GM12878 (cell line): ENCODE measurements at regions of chr7 and their contacts with region 1.

Region 1: DNA sequence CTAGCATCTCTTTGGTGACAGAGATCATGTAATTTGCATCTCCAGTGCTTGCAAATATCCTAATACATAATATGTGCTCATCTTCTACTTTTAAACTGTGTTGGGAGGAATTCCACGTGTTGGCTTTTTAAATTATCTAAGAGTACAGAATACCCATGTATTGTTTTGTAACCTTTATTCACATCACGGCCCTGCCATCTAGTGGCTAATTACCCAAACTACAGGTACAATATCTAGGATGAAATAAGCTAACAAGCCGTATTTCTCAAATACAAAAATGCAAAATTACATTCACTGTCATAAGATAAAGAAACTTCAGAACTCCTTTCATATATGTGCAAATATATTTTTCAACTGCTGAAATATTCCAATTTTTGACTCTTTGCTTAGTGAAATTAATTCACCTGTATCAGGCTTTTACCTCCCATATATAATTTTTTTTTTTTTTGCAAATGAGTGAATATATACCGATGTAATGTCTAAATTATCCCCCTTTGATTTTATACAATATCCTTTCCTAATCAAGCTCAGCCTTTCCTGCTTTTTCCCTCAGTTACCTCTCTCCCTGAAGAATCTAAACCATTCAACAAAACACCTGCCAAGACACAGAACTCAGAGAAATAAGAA is 30.3 kb upstream of the LSM8 start:
- DNase-seq: no peak
- ATAC-seq: peak; percentile 66
- H3K4me3 ChIP-seq: no peak overlapping the region
- H3K27ac ChIP-seq: no peak overlapping the region
- H3K4me1 ChIP-seq: no peaks in the 10 kb centered on the region
- H3K27me3 ChIP-seq: no peaks in the 10 kb centered on the region
- CTCF ChIP-seq: peak; percentile 55 to 68 (median 61); a peak in 5 of 6 replicates
- EP300 ChIP-seq: no peak
- POLR2A ChIP-seq: no peak
- RAD21 ChIP-seq: peak; percentile 72

Region 2: DNA sequence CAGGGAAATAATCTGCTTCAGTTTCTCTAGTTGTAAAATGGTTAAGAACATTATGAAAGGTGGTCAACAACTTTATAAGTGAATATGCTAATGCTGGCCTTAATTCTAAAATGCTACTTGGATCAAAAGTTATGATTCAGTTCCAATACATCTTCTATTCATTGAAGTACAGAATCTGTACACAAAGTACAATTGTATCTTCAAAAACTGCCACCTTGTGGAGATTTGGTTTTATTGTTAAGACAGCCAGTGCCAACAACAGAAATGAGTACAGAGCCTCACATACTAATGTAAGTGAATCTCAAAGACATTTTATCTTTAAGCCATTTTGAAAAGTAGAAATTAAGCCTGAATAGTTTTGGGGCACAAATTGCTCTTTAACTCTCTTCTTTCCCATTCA is 479.8 kb before region 1 on chr7:
- CTCF ChIA-PET with region 1: interaction called, 4 read pairs
- POLR2A ChIA-PET with region 1: no interaction called
- RAD21 ChIA-PET with region 1: no interaction called
- SMC1A ChIA-PET with region 1: interaction called, 3 read pairs
- in situ Hi-C with region 1: no loop called
- intact Hi-C with region 1: loop called (anchors 5 kb)
- DNase-seq: no peak
- ATAC-seq: peak; percentile 93
- H3K4me3 ChIP-seq: no peak overlapping the region
- H3K27ac ChIP-seq: no peak overlapping the region
- H3K4me1 ChIP-seq: no peaks in the 10 kb centered on the region
- H3K27me3 ChIP-seq: no peaks in the 10 kb centered on the region; a peak in 1 of 4 replicates
- CTCF ChIP-seq: peak; percentile 11 to 51 (median 29); a peak in 4 of 6 replicates
- EP300 ChIP-seq: no peak
- POLR2A ChIP-seq: no peak
- RAD21 ChIP-seq: peak; percentile 53; the same call in 1 of the 2 replicates

Region 3: GRCh38 chr7:117759950-117760640 is 393.6 kb before region 1 on chr7:
- CTCF ChIA-PET with region 1: interaction called, 4 read pairs
- POLR2A ChIA-PET with region 1: no interaction called
- RAD21 ChIA-PET with region 1: no interaction called
- SMC1A ChIA-PET with region 1: no interaction called
- in situ Hi-C with region 1: loop called (anchors 5 kb)
- intact Hi-C with region 1: no loop called
- DNase-seq: no peak
- ATAC-seq: peak; percentile 80
- H3K4me3 ChIP-seq: no peak overlapping the region
- H3K27ac ChIP-seq: no peak overlapping the region
- H3K4me1 ChIP-seq: no peaks in the 10 kb centered on the region
- H3K27me3 ChIP-seq: no peaks in the 10 kb centered on the region; a peak in 1 of 4 replicates
- CTCF ChIP-seq: no peak
- EP300 ChIP-seq: peak; percentile 37 to 44; a peak in 2 of 4 replicates
- POLR2A ChIP-seq: no peak
- RAD21 ChIP-seq: no peak

Region 4: DNA sequence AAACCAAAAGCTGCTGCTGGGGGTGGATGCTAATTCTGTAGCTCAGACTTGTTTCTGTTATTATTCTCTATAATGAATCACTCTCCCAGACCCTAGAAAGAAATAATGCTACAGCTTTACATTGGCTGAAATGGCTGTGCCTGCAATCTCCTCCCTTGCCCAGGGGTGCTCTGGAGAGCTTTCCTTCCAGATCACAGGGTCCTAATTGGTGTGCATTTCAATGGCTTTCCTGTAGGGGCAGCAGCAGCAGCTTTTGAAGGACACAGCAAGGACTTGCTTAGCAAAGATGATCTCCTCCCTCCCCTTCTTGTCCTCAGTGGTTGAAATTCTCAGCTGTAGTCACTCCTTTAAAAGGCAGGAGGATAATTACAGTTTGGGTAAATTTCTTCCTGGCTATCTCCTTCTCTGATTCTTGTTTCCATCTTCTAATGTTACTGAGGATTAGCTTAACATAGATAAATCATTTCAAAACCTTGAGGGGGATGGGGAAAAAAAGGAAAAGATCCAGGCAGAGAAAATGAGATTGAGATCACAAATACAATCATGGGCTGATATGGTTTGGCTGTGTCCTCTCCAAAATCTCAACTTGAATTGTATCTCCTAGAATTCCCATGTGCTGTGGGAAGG is 160.2 kb before region 1 on chr7:
- CTCF ChIA-PET with region 1: interaction called, 4 read pairs
- POLR2A ChIA-PET with region 1: no interaction called
- RAD21 ChIA-PET with region 1: interaction called, 8 read pairs
- SMC1A ChIA-PET with region 1: interaction called, 4 read pairs
- in situ Hi-C with region 1: no loop called
- intact Hi-C with region 1: loop called (anchors 5 kb)
- DNase-seq: no peak
- ATAC-seq: peak; percentile 98
- H3K4me3 ChIP-seq: no peak overlapping the region
- H3K27ac ChIP-seq: no peak overlapping the region
- H3K4me1 ChIP-seq: no peaks in the 10 kb centered on the region
- H3K27me3 ChIP-seq: no peaks in the 10 kb centered on the region
- CTCF ChIP-seq: peak; percentile 48 to 65 (median 62)
- EP300 ChIP-seq: no peak
- POLR2A ChIP-seq: no peak
- RAD21 ChIP-seq: peak; percentile 32; the same call in 1 of the 2 replicates

Region 5: DNA sequence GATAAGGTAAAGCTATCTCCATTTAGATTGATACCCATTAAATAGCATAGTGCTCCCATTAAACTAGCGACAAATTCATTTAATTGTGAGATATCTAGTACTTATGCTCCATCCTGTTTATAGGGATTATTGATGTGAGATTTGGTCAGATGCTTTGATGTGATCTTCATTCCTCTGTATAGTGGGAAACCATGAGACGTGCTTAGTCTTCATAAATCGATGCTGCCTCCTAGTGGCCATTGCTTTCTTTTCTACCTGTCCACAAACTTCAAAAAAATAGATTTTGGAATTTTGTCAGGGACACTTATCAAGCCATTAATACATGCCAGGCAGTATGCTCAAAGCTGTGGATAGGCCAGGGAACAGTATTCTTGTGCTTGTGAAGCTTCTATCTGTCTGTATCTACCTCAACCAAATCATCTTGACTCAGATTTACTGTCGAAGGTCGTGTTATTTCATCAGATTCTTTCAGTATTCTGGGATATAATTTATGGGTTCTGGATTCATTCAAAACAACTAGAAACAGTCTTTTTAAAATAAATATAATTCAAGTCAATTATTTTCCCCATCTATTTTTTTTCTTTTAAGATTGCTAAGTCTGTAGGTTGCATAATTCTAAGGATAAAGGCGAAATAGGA is 42.3 kb after region 1 on chr7:
- CTCF ChIA-PET with region 1: interaction called, 20 read pairs
- POLR2A ChIA-PET with region 1: no interaction called
- RAD21 ChIA-PET with region 1: interaction called, 5 read pairs
- SMC1A ChIA-PET with region 1: interaction called, 14 read pairs
- in situ Hi-C with region 1: no loop called
- intact Hi-C with region 1: no loop called
- DNase-seq: no peak
- ATAC-seq: peak; percentile 90
- H3K4me3 ChIP-seq: no peak overlapping the region
- H3K27ac ChIP-seq: no peak overlapping the region
- H3K4me1 ChIP-seq: no peaks in the 10 kb centered on the region
- H3K27me3 ChIP-seq: no peaks in the 10 kb centered on the region
- CTCF ChIP-seq: peak; percentile 69 to 75 (median 74)
- EP300 ChIP-seq: no peak
- POLR2A ChIP-seq: no peak
- RAD21 ChIP-seq: peak; percentile 66